Ovary (tissue), 10 donors: ENCODE measurements at regions of chr14 and their contacts with region 1.

Region 1: DNA sequence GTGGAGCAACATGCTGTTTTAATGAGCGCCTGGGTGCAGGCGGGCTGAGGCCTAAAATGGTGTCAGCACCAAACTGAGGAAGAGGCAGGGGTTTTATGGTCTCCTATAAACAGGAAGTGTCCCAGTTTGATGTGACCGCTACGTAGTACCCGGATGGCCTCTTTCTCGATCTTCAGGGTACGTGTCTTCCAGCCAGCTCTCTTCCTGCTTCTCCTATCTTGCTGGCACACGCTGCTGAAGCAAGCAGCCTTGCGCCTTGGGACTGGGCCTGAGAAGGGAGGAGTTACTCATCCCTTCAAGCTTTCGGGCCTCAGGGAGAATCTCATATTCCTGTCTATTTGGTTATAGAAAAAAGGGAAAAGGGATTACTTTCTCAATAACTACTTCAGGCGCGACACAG is 28.2 kb upstream of the RNASE1 start:
- DNase-seq: no peak
- H3K4me3 ChIP-seq: no peak overlapping the region
- H3K27ac ChIP-seq: no peak overlapping the region
- H3K4me1 ChIP-seq: no peaks in the 10 kb centered on the region
- H3K27me3 ChIP-seq: no peaks in the 10 kb centered on the region
- CTCF ChIP-seq: no peak
- EP300 ChIP-seq: no peak
- POLR2A ChIP-seq: no peak

Region 2: DNA sequence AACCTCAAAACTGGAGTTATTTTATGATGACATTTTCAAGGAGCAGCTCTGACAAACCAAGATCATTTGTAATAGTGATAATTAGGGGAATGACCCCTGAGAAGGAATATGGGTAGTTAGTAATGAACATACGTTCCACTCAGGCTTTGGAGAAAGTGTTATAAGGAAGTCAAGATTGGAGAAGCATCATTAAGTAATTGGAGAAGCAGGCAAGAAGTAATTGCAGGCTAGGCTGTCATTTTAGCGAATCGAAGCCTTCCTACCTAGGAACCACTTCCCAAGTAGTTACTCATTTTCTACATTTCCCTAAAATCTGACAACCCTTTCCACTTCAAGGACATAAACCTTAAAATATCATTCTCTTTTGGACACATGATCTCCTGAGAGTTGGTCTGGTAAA is 61.4 kb before region 1 on chr14:
- intact Hi-C with region 1: loop called in 1 of 4 experiments (anchors 5 kb)
- DNase-seq: no peak
- H3K4me3 ChIP-seq: no peak overlapping the region
- H3K27ac ChIP-seq: no peak overlapping the region
- H3K4me1 ChIP-seq: no peaks in the 10 kb centered on the region
- H3K27me3 ChIP-seq: no peaks in the 10 kb centered on the region
- CTCF ChIP-seq: no peak
- EP300 ChIP-seq: no peak
- POLR2A ChIP-seq: no peak

Region 3: DNA sequence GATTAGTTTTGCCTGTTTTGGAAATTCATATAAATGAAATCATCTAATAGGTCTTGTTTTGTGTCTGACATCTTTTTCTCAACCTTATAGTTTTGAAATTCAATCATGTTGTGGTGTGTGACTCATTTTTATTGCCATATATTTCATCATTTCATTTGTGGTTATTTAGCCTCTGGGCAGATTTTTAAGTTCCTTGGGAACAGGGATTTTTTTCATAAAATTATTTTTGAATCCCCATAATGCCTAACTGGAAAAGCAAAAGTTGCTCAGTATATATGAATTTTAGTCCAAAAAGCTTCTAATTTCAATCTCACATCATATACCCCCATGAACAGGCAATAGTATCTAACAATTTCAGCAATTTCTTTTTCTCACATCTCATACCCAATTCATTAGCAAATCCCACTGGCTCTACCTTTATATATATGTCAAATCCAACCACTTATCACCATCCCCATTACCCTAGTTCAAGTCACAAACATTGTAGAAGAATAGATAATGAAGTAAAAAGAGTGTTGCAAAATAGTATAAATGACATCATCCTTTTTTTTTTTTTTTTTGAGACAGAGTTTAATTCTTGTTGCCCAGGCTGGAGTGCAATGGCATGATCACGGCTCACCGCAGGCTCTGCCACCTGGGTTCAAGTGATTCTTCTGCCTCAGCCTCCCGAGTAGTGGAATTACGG is 1815.9 kb after region 1 on chr14:
- intact Hi-C with region 1: no loop called
- DNase-seq: no peak
- H3K4me3 ChIP-seq: no peak overlapping the region
- H3K27ac ChIP-seq: no peak overlapping the region
- H3K4me1 ChIP-seq: no peaks in the 10 kb centered on the region
- H3K27me3 ChIP-seq: no peaks in the 10 kb centered on the region
- CTCF ChIP-seq: no peak
- EP300 ChIP-seq: no peak
- POLR2A ChIP-seq: no peak